HCT116 (cell line): ENCODE measurements at regions of chr12 and their contacts with region 1.

Region 1: DNA sequence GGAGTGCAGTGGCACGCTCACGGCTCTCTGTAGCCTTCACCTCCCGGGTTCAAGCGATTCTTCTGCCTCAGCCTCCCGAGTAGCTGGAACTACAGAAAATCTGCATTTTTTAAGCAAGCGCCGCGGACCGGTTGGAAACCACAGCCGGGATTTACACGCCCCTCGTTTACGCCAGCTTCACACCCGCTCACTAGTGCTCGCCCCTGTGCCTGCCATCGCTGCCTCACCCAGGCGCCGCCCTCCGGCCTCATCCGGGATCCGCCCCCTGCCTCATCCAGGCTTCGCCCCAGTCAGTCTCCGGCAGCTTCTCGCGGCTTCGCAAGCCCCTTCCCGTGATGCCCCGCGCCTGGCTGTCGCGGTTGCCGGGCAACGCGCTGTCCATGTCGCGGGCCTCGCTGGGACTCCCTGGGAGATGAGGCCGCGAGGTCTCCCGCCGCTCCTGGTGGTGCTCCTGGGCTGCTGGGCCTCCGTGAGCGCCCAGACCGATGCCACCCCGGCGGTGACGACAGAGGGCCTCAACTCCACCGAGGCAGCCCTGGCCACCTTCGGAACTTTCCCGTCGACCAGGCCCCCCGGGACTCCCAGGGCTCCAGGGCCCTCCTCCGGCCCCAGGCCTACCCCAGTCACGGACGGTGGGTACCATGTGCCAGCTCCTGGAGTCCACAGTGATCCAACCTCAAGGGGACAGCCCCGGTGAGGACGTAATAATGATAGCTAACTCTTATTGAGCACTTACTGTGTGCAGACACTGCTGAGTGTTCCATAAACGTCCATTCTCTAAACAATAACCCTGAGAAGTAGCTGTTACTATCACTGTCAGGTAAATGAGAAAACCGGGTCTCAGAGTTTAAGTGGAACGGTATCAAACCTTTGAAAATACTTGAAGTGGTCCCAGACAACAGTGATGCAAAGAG is at the start of gene TCTN1:
- DNase-seq: peak; percentile 76
- ATAC-seq: peak; percentile 99
- H3K4me3 ChIP-seq: peak within 1 kb of the TSS; percentile 84 to 95
- H3K27ac ChIP-seq: peak within 1 kb of the TSS; percentile 21
- H3K4me1 ChIP-seq: peaks cover 10 to 25% of the 10 kb centered on the region in 2 experiments; a peak in 3 of 4 replicates
- H3K27me3 ChIP-seq: no peaks in the 10 kb centered on the region
- CTCF ChIP-seq: no peak
- POLR2A ChIP-seq: peak; percentile 44
- RAD21 ChIP-seq: no peak
- total RNA-seq, gene TCTN1: 27.0 TPM

Region 2: GRCh38 chr12:110698171-110698902 is 84.3 kb after region 1 on chr12:
- CTCF ChIA-PET with region 1: no interaction called
- POLR2A ChIA-PET with region 1: no interaction called
- RAD21 ChIA-PET with region 1: no interaction called
- intact Hi-C with region 1: loop called (anchors 10 kb)
- DNase-seq: peak; percentile 82
- ATAC-seq: peak; percentile 98
- H3K4me3 ChIP-seq: peak overlapping the region in 1 of 2 experiments; percentile 30; a peak in 1 of 4 replicates
- H3K27ac ChIP-seq: peak overlapping the region; percentile 49
- H3K4me1 ChIP-seq: peaks cover 6 to 14% of the 10 kb centered on the region in 2 experiments
- H3K27me3 ChIP-seq: no peaks in the 10 kb centered on the region
- CTCF ChIP-seq: peak; percentile 79 to 81 (median 80); a peak in 5 of 6 replicates
- POLR2A ChIP-seq: no peak
- RAD21 ChIP-seq: peak; percentile 86